ENCODE measurements at regions of chr5 and their contacts with region 1.

Region 1: GRCh38 chr5:73201547-73202513 is 28.8 kb downstream of the TMEM174 start:
- DNase-seq: peak; percentile 87 to 94
- H3K4me3 ChIP-seq: peak overlapping the region; percentile 37
- H3K4me3 Mint-ChIP-seq: peak overlapping the region; percentile 81
- H3K27ac Mint-ChIP-seq: peak overlapping the region; percentile 39
- H3K4me1 ChIP-seq: peaks cover 11% of the 10 kb centered on the region; the same call in 1 of the 2 replicates
- H3K4me1 Mint-ChIP-seq: peaks cover 21% of the 10 kb centered on the region
- H3K27me3 ChIP-seq: no peaks in the 10 kb centered on the region
- H3K27me3 Mint-ChIP-seq: peaks cover 5% of the 10 kb centered on the region
- CTCF ChIP-seq: peak; percentile 94 to 97

Region 2: GRCh38 chr5:72955768-72956323 is 246.0 kb before region 1 on chr5 and contains the start of gene FCHO2:
- CTCF ChIA-PET with region 1: interaction called, 9 read pairs
- POLR2A ChIA-PET with region 1: no interaction called
- intact Hi-C with region 1: loop called (anchors 10 kb)
- DNase-seq: peak; percentile 97 to 98
- H3K4me3 ChIP-seq: peak within 1 kb of the TSS; percentile 87
- H3K4me3 Mint-ChIP-seq: peak within 1 kb of the TSS; percentile 100
- H3K27ac Mint-ChIP-seq: peak within 1 kb of the TSS; percentile 95
- H3K4me1 ChIP-seq: peaks cover 11% of the 10 kb centered on the region; the same call in 1 of the 2 replicates
- H3K4me1 Mint-ChIP-seq: peaks cover 14% of the 10 kb centered on the region
- H3K27me3 ChIP-seq: no peaks in the 10 kb centered on the region
- H3K27me3 Mint-ChIP-seq: no peaks in the 10 kb centered on the region
- CTCF ChIP-seq: peak; percentile 73 to 90
- total RNA-seq, gene FCHO2: 20.6 and 22.9 TPM in 2 replicates

Region 3: GRCh38 chr5:73061593-73061992 is 140.2 kb before region 1 on chr5:
- CTCF ChIA-PET with region 1: no interaction called
- POLR2A ChIA-PET with region 1: no interaction called
- intact Hi-C with region 1: no loop called
- DNase-seq: peak in 1 of 2 experiments; percentile 4
- H3K4me3 ChIP-seq: no peak overlapping the region
- H3K4me3 Mint-ChIP-seq: peak overlapping the region; percentile 27
- H3K27ac Mint-ChIP-seq: no peak overlapping the region
- H3K4me1 ChIP-seq: peaks cover 19% of the 10 kb centered on the region
- H3K4me1 Mint-ChIP-seq: peaks cover 26% of the 10 kb centered on the region
- H3K27me3 ChIP-seq: no peaks in the 10 kb centered on the region
- H3K27me3 Mint-ChIP-seq: no peaks in the 10 kb centered on the region
- CTCF ChIP-seq: no peak

Region 4: GRCh38 chr5:73096239-73096575 is 105.6 kb before region 1 on chr5:
- CTCF ChIA-PET with region 1: interaction called, 5 read pairs
- POLR2A ChIA-PET with region 1: no interaction called
- intact Hi-C with region 1: loop called (anchors 5 kb)
- DNase-seq: no peak
- H3K4me3 ChIP-seq: no peak overlapping the region
- H3K4me3 Mint-ChIP-seq: no peak overlapping the region
- H3K27ac Mint-ChIP-seq: no peak overlapping the region
- H3K4me1 ChIP-seq: peaks cover 11% of the 10 kb centered on the region
- H3K4me1 Mint-ChIP-seq: peaks cover 16% of the 10 kb centered on the region
- H3K27me3 ChIP-seq: no peaks in the 10 kb centered on the region
- H3K27me3 Mint-ChIP-seq: no peaks in the 10 kb centered on the region
- CTCF ChIP-seq: no peak

Region 5: GRCh38 chr5:73152411-73153388 is 49.1 kb before region 1 on chr5:
- CTCF ChIA-PET with region 1: interaction called, 6 read pairs
- POLR2A ChIA-PET with region 1: no interaction called
- intact Hi-C with region 1: loop called (anchors 5 kb)
- DNase-seq: peak in 1 of 2 experiments; percentile 30
- H3K4me3 ChIP-seq: no peak overlapping the region
- H3K4me3 Mint-ChIP-seq: no peak overlapping the region
- H3K27ac Mint-ChIP-seq: no peak overlapping the region
- H3K4me1 ChIP-seq: no peaks in the 10 kb centered on the region
- H3K4me1 Mint-ChIP-seq: peaks cover 7% of the 10 kb centered on the region
- H3K27me3 ChIP-seq: no peaks in the 10 kb centered on the region
- H3K27me3 Mint-ChIP-seq: no peaks in the 10 kb centered on the region
- CTCF ChIP-seq: peak; percentile 20 to 27

Region 6: GRCh38 chr5:73215891-73216610 is 14.2 kb after region 1 on chr5:
- CTCF ChIA-PET with region 1: interaction called, 51 read pairs
- POLR2A ChIA-PET with region 1: no interaction called
- intact Hi-C with region 1: no loop called
- DNase-seq: peak; percentile 80 to 87
- H3K4me3 ChIP-seq: peak overlapping the region; percentile 41
- H3K4me3 Mint-ChIP-seq: peak overlapping the region; percentile 79
- H3K27ac Mint-ChIP-seq: peak overlapping the region; percentile 55
- H3K4me1 ChIP-seq: no peaks in the 10 kb centered on the region
- H3K4me1 Mint-ChIP-seq: peaks cover 6% of the 10 kb centered on the region
- H3K27me3 ChIP-seq: no peaks in the 10 kb centered on the region; the same call in 1 of the 2 replicates
- H3K27me3 Mint-ChIP-seq: peaks cover 3% of the 10 kb centered on the region
- CTCF ChIP-seq: peak; percentile 85 to 86

Measured in Caco-2 (cell line).